Right ventricle myocardium inferior (tissue), 1 donor: ENCODE measurements at regions of chr9 and their contacts with region 1.

Region 1: GRCh38 chr9:33466565-33467495 is 6.9 kb downstream of the NOL6 start:
- DNase-seq: peak; percentile 89
- ATAC-seq: peak; percentile 55

Region 2: DNA sequence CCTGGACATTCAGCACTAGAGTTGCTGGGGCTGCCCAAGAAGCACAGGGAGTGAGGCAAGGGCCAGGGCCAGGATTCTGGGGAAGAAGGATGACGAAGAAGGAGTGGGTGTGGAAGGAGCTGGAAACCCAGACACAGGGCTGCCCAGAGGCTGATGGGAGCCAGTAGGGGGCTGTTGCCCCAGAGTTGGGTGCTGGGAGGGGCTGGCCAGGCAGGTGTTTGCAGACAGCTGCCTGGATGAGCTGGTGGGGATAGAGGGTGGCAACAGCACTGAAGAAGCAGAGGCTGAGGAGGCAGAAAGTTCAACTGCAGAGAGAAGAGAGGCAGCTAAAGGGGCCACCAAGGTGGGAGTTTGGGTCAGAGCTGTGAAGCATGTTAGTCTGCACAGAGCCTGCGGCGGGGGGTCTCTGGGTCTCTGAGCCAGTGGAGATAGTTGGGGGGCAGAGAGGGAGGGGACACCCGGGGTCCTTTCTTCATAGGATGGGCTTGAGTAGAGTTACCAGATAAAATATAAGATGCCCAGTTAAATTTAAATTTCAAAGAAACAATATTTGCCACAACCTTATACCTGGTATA is 62.0 kb before region 1 on chr9:
- intact Hi-C with region 1: loop called (anchors 5 kb)
- DNase-seq: no peak
- ATAC-seq: no peak

Region 3: GRCh38 chr9:33415501-33416038 is 51.3 kb before region 1 on chr9:
- intact Hi-C with region 1: loop called (anchors 5 kb)
- DNase-seq: peak; percentile 84
- ATAC-seq: peak; percentile 70